ENCODE measurements at regions of chr3 and their contacts with region 1.

Region 1: DNA sequence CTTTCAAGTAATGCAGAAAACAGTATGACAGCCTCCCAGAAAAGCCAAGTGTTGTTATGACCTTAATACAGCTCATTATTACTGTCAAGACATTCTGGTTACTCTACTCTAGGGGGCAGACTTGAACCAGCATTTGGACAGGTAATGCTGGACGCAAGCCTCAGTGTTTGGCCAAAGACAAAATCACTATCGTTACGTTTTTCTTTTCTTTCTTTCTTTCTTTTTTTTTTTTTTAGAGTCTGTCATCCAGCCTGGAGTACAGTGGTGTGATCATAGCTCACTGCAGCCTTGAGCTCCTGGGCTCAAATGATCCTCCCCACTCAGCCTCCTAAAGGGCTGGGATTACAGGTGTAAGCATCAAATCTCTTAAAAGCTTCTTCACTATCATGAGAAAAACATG is 29.4 kb upstream of the TMEM45A start:
- DNase-seq: peak in 3 of 5 donors; percentile 21 to 82 (median 56)
- H3K4me3 ChIP-seq: no peak overlapping the region
- H3K27ac ChIP-seq: no peak overlapping the region
- H3K4me1 ChIP-seq: peaks cover 0 to 2% (median 0%) of the 10 kb centered on the region in 3 donors
- H3K27me3 ChIP-seq: no peaks in the 10 kb centered on the region
- CTCF ChIP-seq: peak; percentile 65

Region 2: DNA sequence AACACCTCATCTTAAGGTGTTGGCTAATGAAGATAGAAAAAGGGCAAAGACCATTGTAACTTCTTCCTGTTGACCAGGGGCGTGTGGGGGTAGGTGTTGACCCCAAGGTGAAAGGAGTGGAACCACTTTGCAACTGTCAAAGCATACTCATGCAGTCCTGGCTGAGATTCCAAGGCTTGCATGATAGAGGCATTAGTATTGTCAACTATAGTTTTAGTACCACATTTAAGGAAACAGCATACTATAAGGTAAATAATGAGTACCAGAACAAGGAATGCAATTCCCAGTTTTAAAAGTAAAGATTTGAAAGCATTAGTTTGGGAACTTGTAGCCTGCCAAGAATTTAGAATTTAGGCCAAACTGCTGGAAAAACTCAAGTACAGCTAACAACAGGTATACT is 118.6 kb after region 1 on chr3:
- intact Hi-C with region 1: loop called (anchors 10 kb)
- DNase-seq: no peak
- H3K4me3 ChIP-seq: no peak overlapping the region
- H3K27ac ChIP-seq: no peak overlapping the region
- H3K4me1 ChIP-seq: no peaks in the 10 kb centered on the region
- H3K27me3 ChIP-seq: no peaks in the 10 kb centered on the region
- CTCF ChIP-seq: no peak